ENCODE measurements at regions of chr6 and their contacts with region 1.

Region 1: DNA sequence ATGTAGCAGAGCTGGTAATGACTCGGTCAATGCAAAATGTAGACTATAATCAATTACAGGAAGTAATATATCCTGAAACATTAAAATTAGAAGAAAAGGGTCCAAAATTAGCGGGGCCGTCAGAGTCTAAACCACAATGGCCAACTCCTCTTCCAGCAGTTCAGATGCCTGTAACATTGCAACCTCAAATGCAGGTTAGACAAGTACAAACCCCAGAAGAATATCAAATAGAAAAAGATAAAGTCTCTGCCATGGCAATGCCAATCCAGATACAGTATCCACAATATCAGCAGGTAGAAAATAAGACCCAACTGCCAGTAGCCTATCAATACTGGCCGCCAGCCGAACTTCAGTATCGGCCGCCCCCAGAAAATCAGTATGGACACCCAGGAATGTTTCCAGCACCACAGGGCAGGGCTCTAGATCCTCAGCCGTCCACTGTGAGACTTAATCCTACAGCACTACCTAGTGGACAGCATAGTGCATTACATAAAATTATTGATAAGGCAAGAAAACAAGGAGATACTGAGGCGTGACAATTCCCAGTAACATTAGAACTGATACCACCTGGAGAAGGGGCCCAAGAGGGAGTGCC is 158.4 kb downstream of the GPX5 start:
- DNase-seq: no peak
- H3K4me3 Mint-ChIP-seq: no peak overlapping the region
- H3K27ac Mint-ChIP-seq: no peak overlapping the region
- H3K4me1 Mint-ChIP-seq: peaks cover 19% of the 10 kb centered on the region
- H3K27me3 Mint-ChIP-seq: peaks cover 65% of the 10 kb centered on the region

Region 2: GRCh38 chr6:28393911-28394662 is 290.0 kb before region 1 on chr6:
- intact Hi-C with region 1: loop called (anchors 1 kb)
- DNase-seq: no peak
- H3K4me3 Mint-ChIP-seq: no peak overlapping the region
- H3K27ac Mint-ChIP-seq: no peak overlapping the region
- H3K4me1 Mint-ChIP-seq: peaks cover 47% of the 10 kb centered on the region
- H3K27me3 Mint-ChIP-seq: no peaks in the 10 kb centered on the region

Region 3: GRCh38 chr6:28496099-28496779 is 187.8 kb before region 1 on chr6:
- intact Hi-C with region 1: loop called (anchors 1 kb)
- DNase-seq: no peak
- H3K4me3 Mint-ChIP-seq: no peak overlapping the region
- H3K27ac Mint-ChIP-seq: no peak overlapping the region
- H3K4me1 Mint-ChIP-seq: no peaks in the 10 kb centered on the region
- H3K27me3 Mint-ChIP-seq: peaks cover 22% of the 10 kb centered on the region

Region 4: GRCh38 chr6:28615955-28616747 is 67.9 kb before region 1 on chr6:
- intact Hi-C with region 1: no loop called
- DNase-seq: no peak
- H3K4me3 Mint-ChIP-seq: no peak overlapping the region
- H3K27ac Mint-ChIP-seq: no peak overlapping the region
- H3K4me1 Mint-ChIP-seq: no peaks in the 10 kb centered on the region
- H3K27me3 Mint-ChIP-seq: peaks cover 47% of the 10 kb centered on the region

Region 5: DNA sequence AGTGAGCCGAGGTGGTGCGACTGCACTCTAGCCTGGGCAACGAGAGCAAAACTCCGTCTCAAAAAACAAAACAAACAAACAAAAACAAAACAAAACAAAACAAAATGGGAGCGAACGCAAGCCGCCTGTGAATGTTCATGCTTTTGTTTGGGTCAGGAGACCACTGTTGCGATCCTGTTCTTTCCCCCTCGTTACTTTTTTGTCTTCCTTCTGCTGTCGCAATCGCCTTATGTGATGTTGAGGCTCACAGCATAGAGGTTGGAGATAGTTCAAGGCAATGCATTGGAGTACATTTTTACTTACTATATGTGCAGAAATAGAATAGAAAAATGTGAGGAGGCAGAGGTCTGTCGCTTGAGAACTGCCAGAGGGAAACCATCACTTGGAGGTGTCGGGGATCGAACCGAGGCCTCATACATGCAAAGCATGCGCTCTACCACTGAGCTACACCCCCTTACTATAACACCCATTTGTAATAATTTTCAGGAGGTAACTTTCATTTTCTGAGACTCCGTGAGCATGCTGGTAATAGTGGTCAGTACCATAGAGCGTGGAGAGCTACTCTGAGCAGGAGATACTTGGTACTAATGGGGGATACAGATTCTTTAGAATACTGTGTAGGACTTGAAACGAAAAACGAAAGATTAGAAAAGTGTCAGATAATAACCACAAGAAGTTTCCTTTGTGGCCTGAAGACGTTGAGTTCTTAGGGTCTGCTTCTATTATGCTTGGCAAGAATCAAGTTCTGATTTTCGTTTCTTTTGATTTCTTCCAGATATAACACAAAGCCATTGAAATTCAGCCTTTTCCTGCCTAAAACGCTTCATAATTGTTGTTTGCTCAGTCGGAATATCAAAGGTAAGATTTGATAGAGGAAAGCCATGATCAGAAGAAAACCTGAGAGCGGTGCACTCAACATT is 118.6 kb after region 1 on chr6:
- intact Hi-C with region 1: no loop called
- DNase-seq: no peak
- H3K4me3 Mint-ChIP-seq: no peak overlapping the region
- H3K27ac Mint-ChIP-seq: no peak overlapping the region
- H3K4me1 Mint-ChIP-seq: peaks cover 15% of the 10 kb centered on the region
- H3K27me3 Mint-ChIP-seq: peaks cover 58% of the 10 kb centered on the region

Region 6: GRCh38 chr6:28929887-28930620 is 246.0 kb after region 1 on chr6:
- intact Hi-C with region 1: no loop called
- DNase-seq: no peak
- H3K4me3 Mint-ChIP-seq: no peak overlapping the region
- H3K27ac Mint-ChIP-seq: no peak overlapping the region
- H3K4me1 Mint-ChIP-seq: no peaks in the 10 kb centered on the region
- H3K27me3 Mint-ChIP-seq: peaks cover 6% of the 10 kb centered on the region

Measured in activated T-helper 1 cell treated with anti-CD3 and anti-CD28 coated beads, Interleukin-12 subunit alpha, Interleukin-12 subunit beta, Interleukin-2, Interleukin-4 antibody, amounts not matched to agents 30 ng/mL and 10 ng/mL and 1 ng/mL, durations not matched to agents 14 hours and 24 hours and 36 hours (primary cell).